ENCODE measurements at regions of chr17 and their contacts with region 1.

Region 1: DNA sequence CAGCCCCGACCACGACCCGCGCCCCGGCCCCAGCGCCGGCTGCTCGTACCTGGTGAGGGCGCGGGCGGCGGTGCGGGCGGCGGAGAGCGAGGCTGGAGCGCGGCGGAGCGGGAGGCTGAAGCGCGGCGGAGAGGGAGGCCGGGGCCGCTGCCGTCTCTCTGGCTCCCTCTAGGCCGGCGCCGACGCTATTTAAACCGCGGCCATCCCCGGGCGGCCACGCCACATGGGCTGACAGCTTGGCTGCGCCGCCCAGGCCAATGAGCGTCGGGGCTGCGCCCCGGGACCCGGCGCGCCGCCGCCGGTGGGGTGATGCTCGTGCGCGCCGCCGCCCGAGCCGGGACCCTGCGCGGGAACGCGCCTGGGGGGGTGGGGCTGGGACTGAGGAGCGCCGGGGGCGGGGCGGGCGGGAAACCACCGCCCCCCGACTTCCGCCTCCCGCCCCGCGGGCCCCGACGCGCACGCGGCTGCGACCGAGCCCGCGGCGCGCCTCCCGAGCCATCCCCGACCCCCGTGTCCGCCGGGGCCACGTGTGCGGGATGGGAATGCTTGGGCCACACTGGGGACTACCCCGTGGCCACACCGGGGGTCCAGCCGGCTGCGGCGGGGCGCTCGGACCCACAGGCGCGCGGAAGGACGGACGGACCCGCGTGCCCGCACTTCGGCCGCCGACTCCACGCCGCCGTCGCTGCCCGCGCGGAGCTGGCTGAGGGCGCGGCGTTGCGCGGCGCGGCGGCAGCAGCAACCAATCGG is at the start of gene FASN:
- DNase-seq: peak; percentile 90
- total RNA-seq, gene FASN: 22.9 TPM

Region 2: DNA sequence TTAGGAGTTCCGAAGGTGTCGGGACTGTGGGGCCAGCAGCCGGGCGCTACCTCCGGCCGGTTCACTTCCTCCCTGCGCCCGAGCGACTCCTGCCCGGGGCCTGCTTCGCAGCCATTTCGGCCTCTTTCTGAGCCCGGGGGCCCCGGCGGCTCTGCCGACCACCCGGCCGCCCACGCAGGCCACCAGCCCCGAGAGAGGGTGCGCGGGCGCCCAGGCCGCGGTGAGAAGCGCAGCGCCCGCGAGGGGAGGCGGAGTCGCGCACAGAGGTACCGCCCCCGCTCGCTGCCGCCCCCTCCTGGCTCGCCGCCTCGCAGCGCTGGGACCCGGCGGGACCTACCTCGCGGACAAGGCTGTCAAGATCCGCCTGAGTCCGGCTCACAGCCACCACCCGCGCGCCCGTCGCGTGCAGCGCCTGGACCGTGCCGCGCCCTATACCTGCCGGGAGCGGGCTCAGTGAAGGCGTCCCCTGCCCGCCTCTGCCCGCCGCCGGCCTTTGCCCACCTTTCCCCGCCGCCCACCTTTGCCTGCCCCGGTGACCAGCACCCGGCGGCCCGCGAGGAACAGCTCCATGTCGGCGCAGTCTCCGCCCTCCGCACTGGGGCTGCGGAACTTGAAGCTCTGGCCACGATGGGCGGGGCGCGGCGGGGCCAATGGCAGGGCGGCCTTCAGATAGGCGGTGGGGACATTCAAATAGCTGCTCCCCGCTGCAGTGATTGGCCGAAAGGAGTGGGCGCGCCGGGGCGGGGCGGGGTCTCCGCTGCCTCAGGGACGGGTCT is 60.9 kb before region 1 on chr17 and contains the start of gene DCXR:
- intact Hi-C with region 1: loop called (anchors 5 kb)
- DNase-seq: peak; percentile 99
- total RNA-seq, gene DCXR: 144 TPM